ENCODE measurements at regions of chr7 and their contacts with region 1.

Region 1: GRCh38 chr7:7968543-7969305 is at the start of gene GLCCI1:
- DNase-seq: peak; percentile 98
- ATAC-seq: peak; percentile 88
- H3K4me3 ChIP-seq: peak within 1 kb of the TSS; percentile 82
- H3K27ac ChIP-seq: peak within 1 kb of the TSS; percentile 95
- H3K4me1 ChIP-seq: peaks cover 31% of the 10 kb centered on the region
- H3K27me3 ChIP-seq: no peaks in the 10 kb centered on the region
- CTCF ChIP-seq: no peak
- EP300 ChIP-seq: peak; percentile 21 to 61; a peak in 1 of 4 replicates
- POLR2A ChIP-seq: peak; percentile 74
- RAD21 ChIP-seq: no peak
- polyA plus RNA-seq, gene GLCCI1: 16.2 to 17.9 TPM

Region 2: DNA sequence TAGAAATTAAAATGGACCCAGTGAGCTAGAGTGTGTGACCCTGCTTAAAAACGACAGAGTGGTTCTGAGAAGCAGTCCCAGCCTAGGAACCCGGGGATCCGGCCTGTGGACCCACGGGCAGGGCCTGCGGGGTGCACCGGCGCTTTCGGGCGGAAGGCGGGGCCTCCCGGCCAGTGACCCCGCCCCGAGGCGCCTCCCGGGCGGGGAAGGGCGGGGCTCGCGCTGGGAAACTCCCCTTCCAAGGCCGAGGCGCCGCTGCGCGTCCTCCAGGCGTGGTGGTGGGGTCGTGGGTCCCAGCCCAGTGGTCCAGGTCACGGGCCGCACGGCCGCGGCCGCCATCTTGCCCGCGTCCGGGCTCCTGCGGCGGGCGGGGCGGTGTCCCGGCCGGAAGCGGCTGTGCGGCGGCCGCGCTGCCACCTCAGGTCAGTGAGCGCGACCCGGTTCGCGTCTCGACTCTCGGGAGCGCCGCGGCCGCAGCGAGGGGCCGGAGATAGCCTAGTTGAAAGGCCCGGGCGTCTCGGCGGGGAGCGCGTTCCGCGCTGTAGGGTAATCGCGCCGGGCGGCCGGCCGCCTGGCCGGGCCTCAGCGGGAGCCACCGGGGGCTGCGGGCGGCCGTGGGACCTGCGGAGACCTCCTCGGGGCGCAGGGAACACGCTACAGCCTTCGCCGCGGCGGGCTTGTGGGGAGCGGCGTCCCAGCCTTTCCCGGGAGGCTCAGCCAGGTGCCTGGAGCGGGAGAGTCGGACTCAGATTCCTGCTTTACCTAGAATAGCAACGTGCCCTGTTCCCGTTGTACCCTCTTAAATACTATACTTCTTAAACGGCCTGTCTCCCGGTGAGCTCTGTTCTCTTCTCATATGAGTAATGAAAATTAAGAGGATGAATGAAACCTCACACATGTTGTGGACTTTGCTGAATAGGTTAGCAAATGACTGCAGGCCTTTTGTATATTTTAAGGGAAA is 401.8 kb before region 1 on chr7 and contains the start of gene MIOS:
- CTCF ChIA-PET with region 1: no interaction called
- POLR2A ChIA-PET with region 1: interaction called, 3 read pairs
- RAD21 ChIA-PET with region 1: interaction called, 3 read pairs
- SMC1A ChIA-PET with region 1: no interaction called
- in situ Hi-C with region 1: no loop called
- intact Hi-C with region 1: loop called (anchors 5 kb)
- DNase-seq: no peak
- ATAC-seq: peak; percentile 74
- H3K4me3 ChIP-seq: peak within 1 kb of the TSS; percentile 89
- H3K27ac ChIP-seq: peak within 1 kb of the TSS; percentile 99
- H3K4me1 ChIP-seq: peaks cover 9% of the 10 kb centered on the region
- H3K27me3 ChIP-seq: no peaks in the 10 kb centered on the region
- CTCF ChIP-seq: no peak
- EP300 ChIP-seq: no peak
- POLR2A ChIP-seq: peak; percentile 89
- RAD21 ChIP-seq: no peak
- polyA plus RNA-seq, gene MIOS: 13.1 to 18.7 TPM

Region 3: DNA sequence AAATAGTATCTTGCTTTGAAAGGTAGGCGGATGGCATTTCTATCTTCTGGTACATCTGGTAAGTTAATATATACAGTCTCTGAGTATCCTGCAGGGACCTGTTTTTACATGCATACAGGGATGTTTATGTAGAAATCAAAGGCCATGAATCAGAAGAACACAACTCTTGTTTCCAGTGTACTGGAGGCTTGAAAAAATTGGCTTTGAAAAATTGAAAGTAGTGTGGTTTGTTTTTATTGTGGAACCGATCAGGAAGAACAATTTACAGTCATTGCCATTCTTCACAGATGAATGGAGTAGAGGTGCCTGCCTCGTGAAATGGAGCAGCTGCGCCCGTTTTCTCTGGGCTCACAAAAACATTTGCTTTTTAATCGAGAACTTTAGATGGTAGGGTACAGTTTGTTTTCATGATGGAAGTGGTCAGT is 196.3 kb before region 1 on chr7:
- CTCF ChIA-PET with region 1: no interaction called
- POLR2A ChIA-PET with region 1: interaction called, 4 read pairs
- RAD21 ChIA-PET with region 1: interaction called, 28 read pairs
- SMC1A ChIA-PET with region 1: interaction called, 20 read pairs
- in situ Hi-C with region 1: no loop called
- intact Hi-C with region 1: no loop called
- DNase-seq: no peak
- ATAC-seq: peak; percentile 77
- H3K4me3 ChIP-seq: 0 out of 2 replicates have a peak overlapping the region, but pooled peaks have one; percentile 6
- H3K27ac ChIP-seq: no peak overlapping the region
- H3K4me1 ChIP-seq: peaks cover 18% of the 10 kb centered on the region
- H3K27me3 ChIP-seq: no peaks in the 10 kb centered on the region
- CTCF ChIP-seq: no peak
- EP300 ChIP-seq: no peak
- POLR2A ChIP-seq: no peak
- RAD21 ChIP-seq: no peak

Region 4: DNA sequence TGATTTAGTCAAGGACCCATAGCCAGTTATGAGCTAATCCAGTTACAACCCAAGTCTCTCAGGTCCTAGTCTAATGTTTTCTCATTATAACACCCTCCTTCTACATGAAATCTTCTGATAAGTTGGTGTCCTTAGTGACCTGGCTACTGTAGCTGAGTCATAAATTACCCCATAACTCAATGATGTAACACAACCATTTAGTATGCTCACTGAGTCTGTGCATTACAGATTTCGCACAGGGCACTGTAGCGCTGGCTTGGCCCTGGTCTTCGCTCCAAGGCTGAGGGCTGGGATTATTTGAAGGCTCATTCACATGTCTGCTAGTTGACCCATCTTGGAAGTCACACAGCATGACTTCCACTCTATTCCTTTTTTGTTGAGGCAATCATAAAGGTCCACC is 36.1 kb before region 1 on chr7:
- CTCF ChIA-PET with region 1: no interaction called
- POLR2A ChIA-PET with region 1: no interaction called
- RAD21 ChIA-PET with region 1: no interaction called
- SMC1A ChIA-PET with region 1: interaction called, 15 read pairs
- in situ Hi-C with region 1: no loop called
- intact Hi-C with region 1: no loop called
- DNase-seq: no peak
- ATAC-seq: no peak
- H3K4me3 ChIP-seq: no peak overlapping the region
- H3K27ac ChIP-seq: no peak overlapping the region
- H3K4me1 ChIP-seq: no peaks in the 10 kb centered on the region
- H3K27me3 ChIP-seq: no peaks in the 10 kb centered on the region
- CTCF ChIP-seq: no peak
- EP300 ChIP-seq: no peak
- POLR2A ChIP-seq: no peak
- RAD21 ChIP-seq: no peak

Region 5: GRCh38 chr7:8015100-8015748 is 46.5 kb after region 1 on chr7:
- CTCF ChIA-PET with region 1: interaction called, 8 read pairs
- POLR2A ChIA-PET with region 1: no interaction called
- RAD21 ChIA-PET with region 1: interaction called, 7 read pairs
- SMC1A ChIA-PET with region 1: interaction called, 11 read pairs
- in situ Hi-C with region 1: no loop called
- intact Hi-C with region 1: no loop called
- DNase-seq: no peak
- ATAC-seq: no peak
- H3K4me3 ChIP-seq: no peak overlapping the region
- H3K27ac ChIP-seq: no peak overlapping the region
- H3K4me1 ChIP-seq: no peaks in the 10 kb centered on the region
- H3K27me3 ChIP-seq: no peaks in the 10 kb centered on the region
- CTCF ChIP-seq: no peak
- EP300 ChIP-seq: no peak
- POLR2A ChIP-seq: no peak
- RAD21 ChIP-seq: no peak

Region 6: DNA sequence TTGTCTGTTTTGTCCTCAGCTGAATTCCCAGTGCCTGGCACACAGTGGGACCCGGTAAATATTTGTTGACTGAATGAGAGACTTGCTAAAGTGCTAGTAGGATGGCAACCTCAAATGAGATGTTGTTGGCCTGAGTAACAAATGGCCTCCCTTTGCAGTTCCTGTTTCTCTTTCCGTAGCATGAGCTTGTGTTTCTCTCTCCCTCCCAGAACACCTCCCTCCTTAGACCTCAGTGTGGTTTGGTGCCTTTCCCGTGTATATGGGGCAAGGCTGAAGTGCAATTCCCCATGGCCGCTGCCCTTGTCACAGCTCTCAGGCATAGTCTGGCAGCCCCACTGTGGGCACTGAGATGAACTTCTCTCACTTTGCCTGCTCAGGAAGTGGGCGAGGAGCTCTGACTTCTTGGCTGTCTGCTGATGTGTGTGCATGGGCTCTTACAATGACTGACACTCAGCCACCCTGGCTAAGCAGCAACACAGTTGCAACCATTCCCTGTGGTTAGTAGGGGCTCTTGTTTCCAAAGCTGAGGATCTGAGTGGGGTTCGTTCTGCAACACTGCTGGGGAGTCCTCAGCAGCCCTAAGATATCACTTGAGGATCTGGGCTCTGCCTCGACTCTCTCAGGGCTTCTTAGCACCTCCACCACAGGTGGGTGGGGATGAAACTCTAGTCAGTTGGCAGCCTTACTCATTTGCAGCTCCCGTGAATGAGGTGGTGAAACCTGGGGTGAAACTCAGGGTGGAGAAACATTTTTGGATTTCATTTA is 157.1 kb after region 1 on chr7:
- CTCF ChIA-PET with region 1: interaction called, 3 read pairs
- POLR2A ChIA-PET with region 1: interaction called, 7 read pairs
- RAD21 ChIA-PET with region 1: interaction called, 56 read pairs
- SMC1A ChIA-PET with region 1: interaction called, 29 read pairs
- in situ Hi-C with region 1: no loop called
- intact Hi-C with region 1: no loop called
- DNase-seq: peak; percentile 95
- ATAC-seq: peak; percentile 80
- H3K4me3 ChIP-seq: no peak overlapping the region; the same call in 1 of the 2 replicates
- H3K27ac ChIP-seq: peak overlapping the region; percentile 90
- H3K4me1 ChIP-seq: peaks cover 68% of the 10 kb centered on the region
- H3K27me3 ChIP-seq: no peaks in the 10 kb centered on the region
- CTCF ChIP-seq: no peak
- EP300 ChIP-seq: peak; percentile 66 to 81
- POLR2A ChIP-seq: peak; percentile 74
- RAD21 ChIP-seq: peak; percentile 25

Region 7: GRCh38 chr7:8190119-8190895 is 221.6 kb after region 1 on chr7:
- CTCF ChIA-PET with region 1: interaction called, 14 read pairs
- POLR2A ChIA-PET with region 1: interaction called, 5 read pairs
- RAD21 ChIA-PET with region 1: interaction called, 86 read pairs
- SMC1A ChIA-PET with region 1: interaction called, 16 read pairs
- in situ Hi-C with region 1: no loop called
- intact Hi-C with region 1: loop called (anchors 2 kb)
- DNase-seq: peak; percentile 77
- ATAC-seq: peak; percentile 97
- H3K4me3 ChIP-seq: no peak overlapping the region
- H3K27ac ChIP-seq: peak overlapping the region; percentile 44; the same call in 1 of the 2 replicates
- H3K4me1 ChIP-seq: no peaks in the 10 kb centered on the region
- H3K27me3 ChIP-seq: no peaks in the 10 kb centered on the region
- CTCF ChIP-seq: peak; percentile 66 to 82 (median 81); a peak in 5 of 6 replicates
- EP300 ChIP-seq: no peak
- POLR2A ChIP-seq: no peak
- RAD21 ChIP-seq: peak; percentile 97

Measured in GM12878 (cell line).